Common myeloid progenitor, CD34-positive (primary cell): ENCODE measurements at regions of chr1 and their contacts with region 1.

Region 1: DNA sequence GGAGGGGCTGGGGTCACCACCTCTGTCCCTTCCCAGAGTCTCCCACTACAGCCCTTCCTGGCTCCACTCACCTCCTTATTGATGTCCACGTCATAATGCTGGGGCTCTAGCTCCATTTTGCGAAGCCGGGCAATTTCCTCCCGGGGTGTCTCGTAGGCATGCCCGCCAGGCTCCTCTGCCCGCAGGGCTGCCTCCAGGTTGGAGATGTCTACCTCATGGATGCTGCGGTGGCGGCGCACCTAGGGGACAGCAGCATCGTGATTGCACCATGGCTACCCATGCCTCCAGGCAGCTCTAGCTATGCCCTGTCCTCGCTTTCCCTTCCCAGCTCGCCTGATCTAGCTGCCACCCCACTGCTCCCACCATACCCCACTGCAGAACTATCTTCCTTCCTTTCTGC is 15.1 kb upstream of the GOLT1A start:
- DNase-seq: no peak
- H3K4me3 ChIP-seq: no peak overlapping the region
- H3K27ac ChIP-seq: no peak overlapping the region
- H3K4me1 ChIP-seq: peaks cover 0 to 10% (median 3%) of the 10 kb centered on the region in 4 experiments
- H3K27me3 ChIP-seq: no peaks in the 10 kb centered on the region

Region 2: DNA sequence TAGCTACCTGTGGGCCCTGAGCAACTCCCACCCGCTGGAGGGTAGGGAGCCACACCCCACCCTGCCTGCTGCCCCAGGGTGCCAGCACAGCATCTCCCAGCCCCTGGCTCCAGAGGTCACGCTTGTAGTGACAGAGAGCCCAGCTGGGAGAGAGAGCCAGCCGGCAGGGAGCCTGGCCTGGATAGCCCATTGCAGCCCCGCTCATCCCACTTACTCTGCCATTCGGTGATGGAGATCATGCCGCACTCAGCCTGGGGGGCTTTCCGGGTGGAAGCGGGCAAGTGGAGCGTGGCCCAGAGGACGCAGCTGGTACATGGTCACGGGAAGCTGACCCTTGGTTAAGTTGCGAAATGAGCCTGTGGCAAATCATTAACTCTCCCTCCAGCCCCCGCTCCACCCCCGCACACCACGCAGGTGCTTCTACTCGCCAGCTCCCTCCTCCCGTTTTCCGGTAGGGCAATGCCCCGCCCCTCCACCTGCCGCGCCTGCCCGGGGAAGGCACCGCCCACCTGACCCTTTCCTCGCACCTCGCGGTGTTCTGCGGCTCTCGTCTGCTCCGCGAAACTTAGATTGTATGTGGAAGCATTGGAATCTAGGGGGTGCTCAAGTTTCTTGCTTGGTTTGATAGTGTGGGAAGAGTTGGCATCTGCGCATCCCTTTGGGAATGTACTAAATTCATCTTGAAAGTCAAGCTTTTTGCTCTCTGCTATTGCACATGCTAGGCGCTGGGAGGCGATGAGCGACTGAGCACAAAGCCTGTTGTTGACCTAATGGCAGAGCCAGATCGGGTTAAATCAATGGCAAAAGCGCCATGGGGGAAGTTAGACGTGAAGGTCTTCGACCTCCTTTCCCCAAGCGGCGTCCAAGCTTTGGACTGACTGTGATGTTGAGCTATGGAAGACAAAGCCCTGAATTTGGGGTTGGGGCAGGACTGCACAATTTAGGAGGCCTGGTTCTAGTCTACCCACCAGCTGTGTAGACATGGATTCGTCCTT is 14.9 kb before region 1 on chr1 and contains the start of gene GOLT1A:
- CTCF ChIA-PET with region 1: interaction called, 12 read pairs
- POLR2A ChIA-PET with region 1: no interaction called
- DNase-seq: peak; percentile 61 to 74 (median 70)
- H3K4me3 ChIP-seq: peak within 1 kb of the TSS; percentile 13 to 75 (median 35)
- H3K27ac ChIP-seq: no peak within 1 kb of the TSS
- H3K4me1 ChIP-seq: peaks cover 0 to 19% (median 16%) of the 10 kb centered on the region in 4 experiments
- H3K27me3 ChIP-seq: no peaks in the 10 kb centered on the region

Region 3: DNA sequence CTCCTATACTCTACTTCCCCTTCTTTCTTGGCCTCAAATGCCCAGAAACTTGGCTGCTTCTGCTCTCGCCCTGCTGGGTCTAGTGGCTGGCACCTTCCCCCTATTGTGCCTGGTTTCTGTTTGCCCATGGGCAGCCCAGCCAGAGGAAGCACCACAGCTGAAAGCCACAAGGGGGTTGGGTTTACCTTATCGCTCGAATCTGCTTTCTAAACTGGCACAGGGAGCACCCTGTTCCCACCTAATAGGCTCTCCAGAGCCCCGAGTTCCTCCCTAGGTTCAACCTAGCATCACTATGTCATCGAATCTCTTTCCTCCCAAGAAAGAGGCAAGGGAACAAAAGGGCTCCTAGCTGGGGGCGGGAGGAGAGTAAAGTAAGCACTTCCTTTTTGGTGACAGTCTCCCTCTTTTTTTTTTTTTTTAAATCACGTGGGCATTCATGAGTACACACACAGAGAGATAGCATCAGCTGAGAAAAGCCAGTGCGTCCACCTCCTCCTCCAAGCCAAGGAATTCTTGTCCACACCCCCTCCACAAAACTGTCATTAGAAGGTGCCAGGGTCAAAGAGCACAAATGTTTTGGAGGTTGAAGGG is 58.1 kb after region 1 on chr1:
- CTCF ChIA-PET with region 1: no interaction called
- POLR2A ChIA-PET with region 1: no interaction called
- DNase-seq: peak; percentile 78 to 95 (median 93)
- H3K4me3 ChIP-seq: peak overlapping the region in 6 of 7 experiments; percentile 20 to 64 (median 38)
- H3K27ac ChIP-seq: peak overlapping the region in 1 of 2 experiments; percentile 70
- H3K4me1 ChIP-seq: peaks cover 14 to 61% (median 52%) of the 10 kb centered on the region in 4 experiments
- H3K27me3 ChIP-seq: no peaks in the 10 kb centered on the region